Adrenal gland (tissue), 19 donors: ENCODE measurements at regions of chr1 and their contacts with region 1.

Region 1: GRCh38 chr1:160951443-160952128 is 3.0 kb downstream of the ITLN2 start:
- DNase-seq: peak; percentile 41 to 82 (median 68)
- H3K4me3 ChIP-seq: no peak overlapping the region
- H3K27ac ChIP-seq: no peak overlapping the region
- H3K4me1 ChIP-seq: no peaks in the 10 kb centered on the region
- H3K27me3 ChIP-seq: no peaks in the 10 kb centered on the region
- CTCF ChIP-seq: peak; percentile 45 to 76 (median 68)
- POLR2A ChIP-seq: no peak

Region 2: DNA sequence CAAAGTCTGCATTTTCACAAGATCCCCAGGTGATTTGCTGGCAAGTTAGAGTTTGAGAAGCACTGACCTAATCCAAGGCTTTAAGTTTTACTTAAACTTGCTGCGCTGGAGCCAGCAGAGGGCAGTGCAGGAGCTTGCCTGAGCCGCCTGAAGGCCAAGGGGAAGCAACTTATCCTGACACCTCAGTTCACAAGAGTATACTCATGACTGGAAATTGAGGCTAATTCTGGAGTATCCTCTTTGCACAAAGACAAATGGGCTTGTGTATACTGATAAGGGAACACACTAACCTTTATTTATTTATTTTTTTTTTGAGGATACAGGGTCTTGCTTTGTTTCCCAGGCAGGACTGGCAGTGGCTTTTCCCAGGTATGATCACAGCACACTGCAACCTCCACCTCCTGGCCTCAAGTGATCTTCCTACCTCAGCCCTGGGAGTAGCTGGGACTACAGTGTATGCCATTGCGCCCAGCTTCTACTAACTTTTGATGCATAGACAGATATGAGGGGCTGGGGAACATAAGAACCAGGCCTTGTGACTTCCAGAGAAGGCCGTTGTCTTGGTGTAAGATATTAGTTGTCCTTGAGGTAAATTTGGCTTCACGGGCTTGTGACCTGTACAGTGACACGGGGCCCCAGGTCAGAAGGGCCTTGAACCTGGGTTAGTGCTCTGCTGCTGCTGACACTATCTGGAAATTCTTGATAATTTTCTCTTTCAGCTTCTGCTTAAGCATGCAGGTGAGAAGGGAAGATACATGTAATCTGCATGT is 275.8 kb before region 1 on chr1:
- intact Hi-C with region 1: loop called in 1 of 2 experiments (anchors 10 kb)
- DNase-seq: peak; percentile 54 to 80 (median 70)
- H3K4me3 ChIP-seq: no peak overlapping the region
- H3K27ac ChIP-seq: no peak overlapping the region
- H3K4me1 ChIP-seq: no peaks in the 10 kb centered on the region
- H3K27me3 ChIP-seq: no peaks in the 10 kb centered on the region
- CTCF ChIP-seq: peak; percentile 43 to 71 (median 60)
- POLR2A ChIP-seq: no peak

Region 3: DNA sequence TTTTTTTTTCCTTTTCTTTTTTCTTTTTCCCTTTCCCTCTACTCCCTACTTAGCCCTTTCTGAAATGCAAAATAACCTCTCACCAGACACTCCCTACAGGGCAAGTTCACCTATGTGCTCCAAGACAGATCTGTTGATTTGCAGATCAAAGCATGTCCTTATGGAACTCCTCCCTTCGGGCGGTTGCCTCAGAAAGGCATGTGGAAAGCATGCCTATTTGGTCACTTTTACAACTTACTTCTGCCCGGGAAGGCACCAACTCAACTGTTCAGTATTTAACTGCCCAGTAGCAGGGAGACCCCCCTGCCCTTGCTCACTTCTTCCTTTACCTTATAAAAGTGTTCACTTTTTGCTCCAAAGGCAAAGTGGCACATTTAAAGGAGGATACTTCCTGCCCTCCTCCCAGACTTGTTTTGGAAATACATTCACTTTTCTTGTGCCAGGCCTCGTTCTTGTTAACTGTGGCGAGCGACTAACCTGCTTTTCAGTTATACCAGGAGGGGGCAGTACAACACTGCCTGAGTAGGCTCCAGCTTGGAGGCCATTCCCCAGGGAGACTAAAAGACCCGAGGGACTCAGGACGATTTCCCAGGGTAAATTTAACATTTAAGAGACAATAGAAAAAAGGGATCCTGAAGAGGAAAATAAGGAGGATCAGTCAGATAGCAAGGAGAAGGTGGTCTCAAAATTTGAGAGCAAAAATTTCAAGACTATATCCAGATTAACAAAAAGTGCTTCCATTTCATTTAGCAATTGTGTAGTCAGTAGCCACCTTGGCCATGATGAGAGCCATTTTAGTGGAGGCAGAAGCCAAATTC is 224.9 kb before region 1 on chr1:
- intact Hi-C with region 1: loop called in 1 of 2 experiments (anchors 5 kb)
- DNase-seq: peak; percentile 57 to 77 (median 67)
- H3K4me3 ChIP-seq: no peak overlapping the region
- H3K27ac ChIP-seq: no peak overlapping the region
- H3K4me1 ChIP-seq: peaks cover 0 to 7% of the 10 kb centered on the region in 2 donors
- H3K27me3 ChIP-seq: no peaks in the 10 kb centered on the region
- CTCF ChIP-seq: peak; percentile 74 to 90 (median 86)
- POLR2A ChIP-seq: no peak

Region 4: GRCh38 chr1:160830321-160831153 is 121.0 kb before region 1 on chr1:
- intact Hi-C with region 1: loop called (anchors 5 kb)
- DNase-seq: peak in 6 of 7 donors; percentile 32 to 67 (median 50)
- H3K4me3 ChIP-seq: no peak overlapping the region
- H3K27ac ChIP-seq: no peak overlapping the region
- H3K4me1 ChIP-seq: no peaks in the 10 kb centered on the region
- H3K27me3 ChIP-seq: no peaks in the 10 kb centered on the region
- CTCF ChIP-seq: peak; percentile 30 to 52 (median 46)
- POLR2A ChIP-seq: no peak

Region 5: GRCh38 chr1:160837558-160838205 is 113.9 kb before region 1 on chr1:
- intact Hi-C with region 1: loop called (anchors 5 kb)
- DNase-seq: peak in 2 of 7 donors; percentile 15 to 23
- H3K4me3 ChIP-seq: no peak overlapping the region
- H3K27ac ChIP-seq: no peak overlapping the region
- H3K4me1 ChIP-seq: no peaks in the 10 kb centered on the region
- H3K27me3 ChIP-seq: no peaks in the 10 kb centered on the region
- CTCF ChIP-seq: no peak
- POLR2A ChIP-seq: no peak